ENCODE measurements at regions of chr12 and their contacts with region 1.

Region 1: GRCh38 chr12:2679816-2680675 is 114.7 kb upstream of the FKBP4 start:
- DNase-seq: peak in 1 of 2 donors; percentile 49
- H3K4me3 ChIP-seq: no peak overlapping the region
- H3K27ac ChIP-seq: no peak overlapping the region
- H3K4me1 ChIP-seq: no peaks in the 10 kb centered on the region
- H3K27me3 ChIP-seq: no peaks in the 10 kb centered on the region
- CTCF ChIP-seq: no peak
- POLR2A ChIP-seq: no peak

Region 2: DNA sequence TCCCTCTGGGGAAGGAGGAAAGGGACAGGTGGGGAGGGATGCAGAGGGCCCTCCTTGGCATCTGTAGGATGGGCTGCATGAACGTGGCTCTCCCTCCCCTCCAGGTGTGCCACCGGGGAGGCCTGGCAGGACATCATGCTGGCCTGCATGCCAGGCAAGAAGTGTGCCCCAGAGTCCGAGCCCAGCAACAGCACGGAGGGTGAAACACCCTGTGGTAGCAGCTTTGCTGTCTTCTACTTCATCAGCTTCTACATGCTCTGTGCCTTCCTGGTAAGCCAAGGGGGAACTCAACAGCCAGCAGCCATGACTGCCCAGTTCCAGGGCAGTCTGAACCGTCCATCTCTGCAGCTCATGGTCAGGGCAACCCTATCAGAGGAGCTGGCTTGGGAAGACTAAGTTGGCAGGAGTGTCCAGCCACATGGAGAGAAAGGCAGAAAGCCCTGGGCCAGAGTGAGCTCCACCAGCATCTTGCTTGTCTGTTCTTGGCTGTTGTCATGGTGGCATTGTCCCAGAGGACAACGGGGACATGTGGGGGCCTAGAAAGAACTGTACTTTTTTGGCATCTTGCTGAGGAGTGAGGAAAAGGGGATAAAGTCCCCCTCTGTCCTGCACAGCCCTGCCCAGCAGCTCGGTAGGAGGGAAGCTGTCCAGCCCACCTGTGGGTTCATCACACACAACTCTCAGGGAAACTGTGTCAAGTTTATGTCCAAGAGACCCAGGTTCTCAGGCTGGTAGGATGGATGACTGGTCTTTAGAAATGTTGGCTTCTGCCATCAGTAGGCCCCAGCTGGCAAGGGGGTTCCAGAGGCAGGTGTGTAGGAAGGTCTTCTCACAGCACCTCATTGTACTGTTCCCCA is 15.1 kb before region 1 on chr12:
- intact Hi-C with region 1: loop called (anchors 1 kb)
- DNase-seq: peak in 1 of 2 donors; percentile 22
- H3K4me3 ChIP-seq: no peak overlapping the region
- H3K27ac ChIP-seq: no peak overlapping the region
- H3K4me1 ChIP-seq: no peaks in the 10 kb centered on the region
- H3K27me3 ChIP-seq: no peaks in the 10 kb centered on the region
- CTCF ChIP-seq: no peak
- POLR2A ChIP-seq: no peak